PC-9 (cell line): ENCODE measurements at regions of chr17 and their contacts with region 1.

Region 1: GRCh38 chr17:28041068-28041843 is 1.2 kb upstream of the NLK start:
- DNase-seq: peak; percentile 98 to 99
- H3K4me3 ChIP-seq: peak overlapping the region; percentile 76
- H3K27ac ChIP-seq: no peak overlapping the region
- H3K4me1 ChIP-seq: peaks cover 29% of the 10 kb centered on the region
- H3K27me3 ChIP-seq: no peaks in the 10 kb centered on the region
- CTCF ChIP-seq: no peak

Region 2: DNA sequence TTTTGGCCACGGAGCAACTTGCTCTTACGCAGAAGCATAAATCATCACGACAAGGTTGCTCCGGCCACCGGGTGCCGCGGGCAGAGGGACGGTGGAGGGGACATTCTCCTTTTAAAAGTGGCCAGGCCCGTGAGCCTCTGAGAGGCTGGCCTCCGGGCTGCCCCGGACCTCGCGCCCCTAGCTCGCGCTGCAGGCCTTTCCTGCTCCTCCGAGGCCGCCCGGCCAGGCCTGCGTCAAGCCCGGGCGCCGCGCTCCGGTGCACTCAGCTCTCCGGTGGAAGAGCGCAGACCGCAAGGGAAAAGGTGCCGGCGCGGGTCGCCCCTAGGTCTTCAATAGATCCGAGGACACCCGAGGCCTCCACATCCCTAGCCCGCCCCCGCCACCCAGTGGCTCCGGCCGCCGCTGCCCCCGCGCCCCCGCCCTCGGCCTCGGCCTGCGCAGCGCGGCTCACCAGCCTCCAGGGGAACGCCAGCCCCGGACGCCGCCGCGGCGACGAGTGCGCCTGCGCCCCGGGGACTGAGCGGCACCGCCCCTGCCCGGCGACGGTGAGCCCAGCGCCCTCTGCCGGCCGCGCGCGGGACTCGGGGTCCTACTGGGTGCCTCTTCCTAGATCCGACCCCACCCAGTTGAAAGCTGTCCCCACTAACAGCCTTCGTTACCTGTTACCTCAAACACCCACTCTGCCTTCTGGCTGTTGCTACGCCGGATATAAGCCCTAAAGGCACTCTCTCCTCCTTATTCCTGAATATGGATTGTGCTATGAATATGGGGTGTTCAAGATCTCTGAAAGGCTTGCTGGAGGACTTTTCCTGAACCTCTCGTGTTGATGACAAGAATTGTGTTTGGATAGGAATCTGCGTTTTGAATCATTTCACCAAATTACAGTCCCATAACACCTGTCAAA is 148.1 kb before region 1 on chr17 and contains the start of gene LYRM9:
- CTCF ChIA-PET with region 1: interaction called, 4 read pairs
- POLR2A ChIA-PET with region 1: interaction called, 8 read pairs
- intact Hi-C with region 1: loop called (anchors 5 kb)
- DNase-seq: peak; percentile 55 to 94
- H3K4me3 ChIP-seq: peak within 1 kb of the TSS; percentile 78
- H3K27ac ChIP-seq: no peak within 1 kb of the TSS
- H3K4me1 ChIP-seq: peaks cover 21% of the 10 kb centered on the region
- H3K27me3 ChIP-seq: no peaks in the 10 kb centered on the region
- CTCF ChIP-seq: peak; percentile 81
- total RNA-seq, gene LYRM9: 7.6 and 9.2 TPM in 2 replicates

Region 3: DNA sequence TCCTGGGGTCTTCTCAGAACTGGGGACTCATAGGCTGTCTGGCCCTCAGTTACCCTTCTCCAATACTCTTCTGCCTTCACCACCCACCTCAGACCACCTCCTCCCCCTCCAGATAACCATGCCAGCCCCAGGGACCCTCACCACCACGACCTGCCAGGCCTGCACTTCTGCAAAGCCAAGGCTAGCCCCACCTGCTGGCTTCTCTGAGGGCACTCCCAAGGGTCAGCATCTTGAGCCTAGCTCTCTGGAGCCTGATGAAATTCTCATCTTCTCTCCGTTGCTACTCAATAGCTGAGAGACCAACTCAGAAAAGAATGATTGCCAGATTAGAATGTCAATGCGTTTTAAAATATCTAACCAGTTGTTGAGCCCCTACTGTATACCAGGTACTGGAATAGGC is 92.0 kb before region 1 on chr17:
- CTCF ChIA-PET with region 1: interaction called, 15 read pairs
- POLR2A ChIA-PET with region 1: no interaction called
- intact Hi-C with region 1: no loop called
- DNase-seq: no peak
- H3K4me3 ChIP-seq: no peak overlapping the region
- H3K27ac ChIP-seq: no peak overlapping the region
- H3K4me1 ChIP-seq: no peaks in the 10 kb centered on the region
- H3K27me3 ChIP-seq: peaks cover 15% of the 10 kb centered on the region; the same call in 1 of the 2 replicates
- CTCF ChIP-seq: no peak

Region 4: DNA sequence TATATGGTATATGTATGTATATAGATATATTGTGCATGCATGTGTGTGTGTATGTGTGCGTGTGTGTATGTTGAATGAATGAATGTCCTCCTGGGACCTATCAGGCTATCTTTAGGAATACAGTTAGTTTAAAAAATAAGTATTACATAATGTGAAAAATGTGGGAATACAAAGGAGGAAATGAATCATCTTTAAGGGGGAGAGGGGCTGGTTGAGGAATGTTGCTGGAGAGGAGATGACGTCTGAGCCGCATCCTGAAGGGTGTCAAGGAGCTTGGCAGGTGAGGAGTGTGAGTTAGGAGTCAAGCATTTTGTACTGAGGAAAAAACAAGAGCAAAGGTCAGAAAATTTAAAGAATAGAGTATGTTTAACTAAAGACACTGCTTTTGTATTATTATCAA is 61.2 kb before region 1 on chr17:
- CTCF ChIA-PET with region 1: no interaction called
- POLR2A ChIA-PET with region 1: no interaction called
- intact Hi-C with region 1: loop called (anchors 10 kb)
- DNase-seq: peak; percentile 42 to 48
- H3K4me3 ChIP-seq: no peak overlapping the region
- H3K27ac ChIP-seq: peak overlapping the region; percentile 55; the same call in 1 of the 2 replicates
- H3K4me1 ChIP-seq: peaks cover 20% of the 10 kb centered on the region
- H3K27me3 ChIP-seq: no peaks in the 10 kb centered on the region
- CTCF ChIP-seq: no peak

Region 5: GRCh38 chr17:28008542-28008941 is 32.7 kb before region 1 on chr17:
- CTCF ChIA-PET with region 1: no interaction called
- POLR2A ChIA-PET with region 1: interaction called, 12 read pairs
- intact Hi-C with region 1: no loop called
- DNase-seq: peak; percentile 30 to 54
- H3K4me3 ChIP-seq: no peak overlapping the region
- H3K27ac ChIP-seq: no peak overlapping the region
- H3K4me1 ChIP-seq: no peaks in the 10 kb centered on the region
- H3K27me3 ChIP-seq: peaks cover 47% of the 10 kb centered on the region
- CTCF ChIP-seq: no peak

Region 6: DNA sequence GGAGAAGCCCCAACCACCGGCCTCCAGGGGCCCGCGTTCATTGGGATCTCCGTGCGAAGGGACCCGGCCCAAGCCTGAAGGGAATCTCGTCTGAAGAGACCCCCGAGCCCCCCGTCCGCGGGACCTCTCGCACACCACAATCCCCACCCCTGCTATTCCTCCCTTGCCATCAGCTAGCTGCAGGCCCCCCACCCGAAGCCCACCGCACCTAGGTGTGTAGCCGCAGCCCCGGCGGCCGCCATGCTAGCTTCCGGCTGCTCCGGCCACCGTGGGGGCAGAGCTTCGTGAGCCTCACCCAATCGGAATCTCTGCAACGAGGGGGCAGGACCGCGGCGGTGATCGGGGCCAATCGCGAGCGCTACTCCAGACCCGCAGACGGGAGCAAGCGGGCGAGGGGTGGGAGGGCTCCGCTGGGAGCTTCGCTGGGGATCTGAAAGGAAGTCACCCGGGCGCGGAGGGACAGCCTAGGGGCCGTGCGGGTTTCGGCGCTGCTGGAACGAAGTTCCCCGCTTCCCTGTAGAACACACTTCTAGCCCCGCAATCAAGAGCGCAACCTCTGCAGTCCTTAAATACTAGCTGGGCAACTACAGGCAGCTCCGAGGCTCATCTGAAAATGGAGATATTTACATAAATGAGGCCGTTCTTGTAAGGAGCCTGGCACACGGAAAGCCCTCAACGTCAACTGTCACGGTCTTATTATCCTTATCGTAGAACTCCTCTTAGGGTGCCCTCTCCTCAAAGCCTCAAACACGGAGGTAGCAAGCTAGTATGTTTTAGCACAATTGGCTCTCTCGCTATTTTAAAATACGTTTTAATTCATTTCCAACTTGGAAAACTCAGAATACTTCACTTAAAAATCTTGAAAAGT is 530.2 kb after region 1 on chr17 and contains the start of gene PIGS:
- CTCF ChIA-PET with region 1: no interaction called
- POLR2A ChIA-PET with region 1: interaction called, 15 read pairs
- intact Hi-C with region 1: no loop called
- DNase-seq: peak; percentile 84 to 92
- H3K4me3 ChIP-seq: peak within 1 kb of the TSS; percentile 81
- H3K27ac ChIP-seq: no peak within 1 kb of the TSS
- H3K4me1 ChIP-seq: peaks cover 17% of the 10 kb centered on the region
- H3K27me3 ChIP-seq: no peaks in the 10 kb centered on the region
- CTCF ChIP-seq: no peak
- total RNA-seq, gene PIGS: 57.6 and 64.2 TPM in 2 replicates

Region 7: DNA sequence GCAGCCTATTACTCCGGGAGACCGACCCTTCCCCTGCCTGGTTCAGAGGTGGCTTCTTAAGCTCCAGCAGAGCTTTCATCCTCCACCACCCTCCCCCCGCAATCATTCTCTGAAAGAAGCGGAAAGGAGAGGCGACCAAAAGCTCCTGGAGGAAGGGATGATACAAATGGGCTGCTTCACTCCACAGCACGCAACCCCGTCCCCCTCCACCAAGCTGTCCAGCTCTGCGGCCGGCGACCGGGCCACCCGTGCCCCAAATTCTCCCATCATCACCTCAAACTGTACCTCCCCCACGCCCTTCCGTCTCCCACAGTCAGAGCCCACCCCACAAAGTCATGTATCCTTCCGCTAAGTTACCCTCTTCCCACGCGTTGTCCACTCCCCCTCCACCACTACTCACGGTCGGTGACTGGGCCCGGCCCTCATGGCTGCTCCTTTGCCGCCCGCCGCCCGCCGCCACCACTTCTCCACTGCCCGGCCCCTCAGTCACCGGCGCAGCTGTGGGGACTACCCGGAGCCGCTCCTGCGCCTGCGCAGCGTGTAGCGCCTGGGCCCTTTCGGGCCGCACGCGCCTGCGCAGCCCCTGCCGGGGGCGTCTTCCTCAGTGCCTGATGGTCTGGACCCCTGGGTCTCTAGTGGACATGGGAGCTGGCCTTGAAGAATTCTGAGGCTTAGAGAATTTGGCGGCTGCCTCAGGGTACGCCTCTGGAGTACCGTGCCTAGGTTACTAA is 801.2 kb after region 1 on chr17 and contains the start of gene FAM222B:
- CTCF ChIA-PET with region 1: no interaction called
- POLR2A ChIA-PET with region 1: interaction called, 10 read pairs
- intact Hi-C with region 1: no loop called
- DNase-seq: peak; percentile 63 to 84
- H3K4me3 ChIP-seq: peak within 1 kb of the TSS; percentile 89
- H3K27ac ChIP-seq: 0 out of 2 replicates have a peak within 1 kb of the TSS, but pooled peaks have one; percentile 20
- H3K4me1 ChIP-seq: peaks cover 12% of the 10 kb centered on the region
- H3K27me3 ChIP-seq: no peaks in the 10 kb centered on the region
- CTCF ChIP-seq: no peak
- total RNA-seq, gene FAM222B: 14.2 and 26.4 TPM in 2 replicates